Posterior cingulate gyrus (tissue), 11 donors: ENCODE measurements at regions of chr7 and their contacts with region 1.

Region 1: DNA sequence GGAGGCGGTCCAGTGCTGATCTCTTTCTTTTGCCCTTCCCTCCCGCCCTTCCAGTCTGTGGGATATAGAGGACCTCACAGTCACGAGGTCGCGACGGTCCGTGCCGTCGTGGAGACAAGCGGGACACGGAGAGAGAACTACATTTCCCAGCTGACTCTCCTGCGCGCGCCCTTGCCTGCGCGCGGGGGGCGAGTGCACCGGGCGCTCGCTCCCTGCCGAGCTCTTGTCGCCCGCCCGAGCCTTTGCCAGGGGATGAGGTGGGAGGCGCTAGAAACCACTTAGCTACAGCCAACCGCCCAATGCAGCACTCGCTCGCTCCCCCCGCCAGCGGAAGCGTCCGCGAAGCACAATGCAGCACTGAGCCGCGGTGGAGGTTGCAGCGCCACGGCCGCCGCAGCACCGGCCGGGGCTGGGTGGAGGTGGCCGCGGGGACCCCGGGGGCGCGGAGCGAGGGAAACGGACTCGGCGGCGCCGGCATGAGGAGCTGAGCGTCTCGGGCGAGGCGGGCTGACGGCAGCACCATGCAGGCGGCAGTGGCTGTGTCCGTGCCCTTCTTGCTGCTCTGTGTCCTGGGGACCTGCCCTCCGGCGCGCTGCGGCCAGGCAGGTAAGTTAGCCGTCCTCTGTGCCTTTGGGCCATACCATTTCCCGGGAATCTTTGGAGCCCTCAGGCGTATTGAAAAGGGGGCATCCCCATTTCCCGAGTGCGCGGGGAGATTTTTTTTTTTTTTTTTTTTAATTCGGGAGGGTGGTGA is at the start of gene ADAM22:
- DNase-seq: peak; percentile 91 to 99 (median 94)

Region 2: GRCh38 chr7:87672217-87672616 is 261.9 kb before region 1 on chr7:
- intact Hi-C with region 1: no loop called
- DNase-seq: peak in 1 of 10 donors; percentile 27

Region 3: GRCh38 chr7:87876040-87876868 is 57.9 kb before region 1 on chr7 and contains the starts of genes DBF4 and SLC25A40:
- intact Hi-C with region 1: loop called (anchors 5 kb)
- DNase-seq: peak; percentile 84 to 99 (median 92)

Region 4: DNA sequence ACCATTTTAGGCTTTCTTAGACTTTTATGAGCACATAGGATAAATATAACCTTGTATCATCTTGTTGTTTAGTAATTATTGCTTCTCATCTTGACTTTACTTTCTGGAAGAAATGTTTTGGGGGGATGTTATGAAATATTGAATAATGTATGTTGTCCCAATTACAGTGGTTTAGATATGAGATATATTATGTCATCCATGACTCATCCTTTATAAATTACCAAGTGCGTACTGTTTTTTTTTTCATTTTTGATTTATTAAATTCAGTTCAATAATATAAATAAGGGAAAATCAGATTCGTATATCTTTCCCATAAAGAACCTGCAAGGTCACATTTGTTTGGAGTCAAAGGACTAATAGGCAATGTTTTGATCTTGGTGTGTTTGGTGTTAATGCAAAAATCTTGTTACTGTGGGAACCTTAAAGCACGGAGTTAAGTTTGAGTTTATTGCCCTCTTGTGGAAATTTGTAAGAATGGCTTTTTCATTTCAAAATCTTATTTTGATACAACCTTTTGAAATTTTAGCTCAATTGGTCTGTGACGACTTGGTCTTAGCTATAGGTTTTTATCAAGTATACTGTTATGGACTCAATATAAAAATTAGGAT is 177.1 kb after region 1 on chr7:
- intact Hi-C with region 1: loop called (anchors 5 kb)
- DNase-seq: no peak